GM12878 (cell line): ENCODE measurements at regions of chr15 and their contacts with region 1.

Region 1: DNA sequence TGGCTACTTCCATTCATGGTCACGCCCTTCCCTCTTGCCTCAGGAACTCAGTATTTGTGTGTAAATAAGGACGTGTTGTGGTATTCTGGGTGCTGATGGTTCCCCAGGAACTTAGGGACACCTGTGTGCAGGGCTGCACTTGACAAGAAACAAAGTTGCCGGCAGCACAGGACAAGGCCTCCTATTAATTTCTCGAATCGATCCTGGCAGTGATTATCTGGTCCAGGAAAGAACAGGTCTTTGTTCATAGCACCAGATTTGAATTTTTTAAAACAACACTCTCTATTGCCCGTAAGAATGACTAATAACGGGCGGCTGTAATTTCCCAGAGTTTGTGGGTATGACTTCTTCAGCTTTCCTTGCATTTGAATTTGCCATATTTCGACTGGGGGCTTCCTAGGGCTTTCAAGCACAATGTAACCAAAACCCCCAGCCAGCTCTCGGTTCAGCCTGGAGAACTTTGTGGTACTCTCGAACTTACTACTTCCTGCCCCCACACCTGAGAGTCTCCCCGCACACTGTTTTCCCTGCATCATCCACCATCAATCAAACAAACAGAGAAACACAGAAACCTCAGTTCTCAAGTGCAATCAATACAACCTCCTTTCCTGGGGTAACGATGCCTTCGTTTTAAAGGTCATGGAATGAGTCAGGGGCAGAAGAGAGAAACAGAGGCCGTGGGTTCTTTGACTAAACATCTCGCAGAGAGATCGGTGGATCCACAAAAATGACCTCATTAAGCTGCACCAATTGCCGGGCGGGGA is 241.7 kb upstream of the ICE2 start:
- DNase-seq: peak; percentile 67
- ATAC-seq: peak; percentile 88
- H3K4me3 ChIP-seq: peak overlapping the region; percentile 48; the same call in 1 of the 2 replicates
- H3K27ac ChIP-seq: peak overlapping the region; percentile 68
- H3K4me1 ChIP-seq: peaks cover 35% of the 10 kb centered on the region
- H3K27me3 ChIP-seq: no peaks in the 10 kb centered on the region
- CTCF ChIP-seq: no peak
- EP300 ChIP-seq: peak; percentile 28 to 54; a peak in 3 of 4 replicates
- POLR2A ChIP-seq: no peak
- RAD21 ChIP-seq: no peak; the same call in 1 of the 2 replicates

Region 2: GRCh38 chr15:60594071-60594470 is 126.6 kb before region 1 on chr15:
- CTCF ChIA-PET with region 1: no interaction called
- POLR2A ChIA-PET with region 1: no interaction called
- RAD21 ChIA-PET with region 1: no interaction called
- SMC1A ChIA-PET with region 1: no interaction called
- in situ Hi-C with region 1: no loop called
- intact Hi-C with region 1: no loop called
- DNase-seq: no peak
- ATAC-seq: no peak
- H3K4me3 ChIP-seq: no peak overlapping the region
- H3K27ac ChIP-seq: no peak overlapping the region
- H3K4me1 ChIP-seq: no peaks in the 10 kb centered on the region
- H3K27me3 ChIP-seq: no peaks in the 10 kb centered on the region; a peak in 1 of 4 replicates
- CTCF ChIP-seq: no peak
- EP300 ChIP-seq: no peak
- POLR2A ChIP-seq: no peak
- RAD21 ChIP-seq: no peak

Region 3: GRCh38 chr15:60649845-60650548 is 70.7 kb before region 1 on chr15:
- CTCF ChIA-PET with region 1: no interaction called
- POLR2A ChIA-PET with region 1: no interaction called
- RAD21 ChIA-PET with region 1: no interaction called
- SMC1A ChIA-PET with region 1: interaction called, 3 read pairs
- in situ Hi-C with region 1: no loop called
- intact Hi-C with region 1: loop called (anchors 2 kb)
- DNase-seq: peak; percentile 57
- ATAC-seq: peak; percentile 69
- H3K4me3 ChIP-seq: peak overlapping the region; percentile 55; the same call in 1 of the 2 replicates
- H3K27ac ChIP-seq: peak overlapping the region; percentile 84
- H3K4me1 ChIP-seq: peaks cover 42% of the 10 kb centered on the region
- H3K27me3 ChIP-seq: no peaks in the 10 kb centered on the region
- CTCF ChIP-seq: peak in 2 of 3 experiments; percentile 33 to 34; a peak in 4 of 6 replicates
- EP300 ChIP-seq: peak; percentile 77 to 89; a peak in 3 of 4 replicates
- POLR2A ChIP-seq: no peak
- RAD21 ChIP-seq: peak; percentile 77

Region 4: GRCh38 chr15:60798821-60799220 is 78.1 kb after region 1 on chr15:
- CTCF ChIA-PET with region 1: no interaction called
- POLR2A ChIA-PET with region 1: no interaction called
- RAD21 ChIA-PET with region 1: no interaction called
- SMC1A ChIA-PET with region 1: interaction called, 3 read pairs
- in situ Hi-C with region 1: no loop called
- intact Hi-C with region 1: loop called (anchors 2 kb)
- DNase-seq: peak; percentile 19
- ATAC-seq: peak; percentile 76
- H3K4me3 ChIP-seq: no peak overlapping the region
- H3K27ac ChIP-seq: no peak overlapping the region
- H3K4me1 ChIP-seq: peaks cover 19% of the 10 kb centered on the region
- H3K27me3 ChIP-seq: no peaks in the 10 kb centered on the region
- CTCF ChIP-seq: no peak
- EP300 ChIP-seq: no peak
- POLR2A ChIP-seq: no peak
- RAD21 ChIP-seq: 0 out of 2 replicates have a peak, but pooled peaks have one; percentile 20